ENCODE measurements at regions of chr6 and their contacts with region 1.

Region 1: DNA sequence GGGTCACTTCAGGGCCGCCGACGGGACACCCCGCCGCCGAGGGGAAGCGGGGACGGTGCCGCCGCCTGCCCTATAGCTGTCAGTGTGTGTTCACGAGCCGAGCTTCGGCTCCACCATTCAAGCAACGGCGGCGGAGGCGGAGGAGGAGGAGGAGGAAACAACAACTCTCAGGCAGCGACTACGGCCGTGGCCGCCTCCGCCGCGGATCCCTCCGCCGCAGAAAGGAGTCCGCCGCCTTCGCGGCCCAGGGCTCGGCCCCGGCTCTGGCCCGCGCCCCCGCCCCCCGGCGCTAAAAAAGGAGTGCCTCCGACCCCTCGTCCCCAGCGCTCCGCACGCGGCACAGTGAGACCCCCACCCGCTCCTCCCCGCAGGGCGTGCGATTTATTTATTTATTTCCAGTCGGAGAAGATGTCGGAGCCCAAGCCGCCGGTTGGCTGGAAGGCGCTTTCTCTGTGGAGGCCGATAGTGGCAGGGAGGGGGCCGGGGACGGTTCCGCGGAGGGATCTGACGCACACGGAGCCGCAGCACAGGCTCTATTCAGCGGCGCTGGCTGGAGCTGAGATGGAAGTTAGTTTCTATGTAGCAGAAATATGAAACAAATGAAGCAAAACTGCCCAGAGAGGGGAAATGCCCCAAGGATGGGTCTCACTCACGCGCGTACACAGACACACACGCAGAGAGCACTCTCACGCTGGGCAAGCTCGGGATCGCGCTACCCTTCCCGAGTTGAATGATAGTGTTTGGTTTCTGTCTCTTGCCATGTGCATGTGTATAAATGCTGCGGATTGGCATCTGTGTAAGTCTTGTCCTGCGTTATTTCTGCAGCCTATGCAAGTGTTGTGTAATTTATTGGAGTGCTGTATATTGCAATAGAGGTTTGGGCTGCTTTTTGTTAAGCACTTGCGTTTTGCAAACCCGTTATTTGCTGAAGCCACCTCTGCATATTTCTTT is at the start of gene PHIP:
- DNase-seq: peak; percentile 84 to 97 (median 91)
- ATAC-seq: peak; percentile 81
- H3K4me3 ChIP-seq: peak within 1 kb of the TSS; percentile 77 to 89
- H3K4me3 Mint-ChIP-seq: peak within 1 kb of the TSS; percentile 89
- H3K27ac ChIP-seq: peak within 1 kb of the TSS; percentile 90 to 95
- H3K27ac Mint-ChIP-seq: peak within 1 kb of the TSS; percentile 92
- H3K4me1 ChIP-seq: peaks cover 21% of the 10 kb centered on the region
- H3K4me1 Mint-ChIP-seq: peaks cover 41% of the 10 kb centered on the region
- H3K27me3 ChIP-seq: no peaks in the 10 kb centered on the region
- H3K27me3 Mint-ChIP-seq: peaks cover 12% of the 10 kb centered on the region
- CTCF ChIP-seq: no peak
- total RNA-seq, gene PHIP: 32.3 to 32.6 TPM

Region 2: GRCh38 chr6:77447254-77447653 is 1631.1 kb before region 1 on chr6:
- CTCF ChIA-PET with region 1: no interaction called
- POLR2A ChIA-PET with region 1: no interaction called
- intact Hi-C with region 1: no loop called
- DNase-seq: no peak
- ATAC-seq: no peak
- H3K4me3 ChIP-seq: no peak overlapping the region
- H3K4me3 Mint-ChIP-seq: no peak overlapping the region
- H3K27ac ChIP-seq: no peak overlapping the region
- H3K27ac Mint-ChIP-seq: no peak overlapping the region
- H3K4me1 ChIP-seq: no peaks in the 10 kb centered on the region
- H3K4me1 Mint-ChIP-seq: no peaks in the 10 kb centered on the region
- H3K27me3 ChIP-seq: no peaks in the 10 kb centered on the region
- H3K27me3 Mint-ChIP-seq: no peaks in the 10 kb centered on the region
- CTCF ChIP-seq: no peak

Region 3: DNA sequence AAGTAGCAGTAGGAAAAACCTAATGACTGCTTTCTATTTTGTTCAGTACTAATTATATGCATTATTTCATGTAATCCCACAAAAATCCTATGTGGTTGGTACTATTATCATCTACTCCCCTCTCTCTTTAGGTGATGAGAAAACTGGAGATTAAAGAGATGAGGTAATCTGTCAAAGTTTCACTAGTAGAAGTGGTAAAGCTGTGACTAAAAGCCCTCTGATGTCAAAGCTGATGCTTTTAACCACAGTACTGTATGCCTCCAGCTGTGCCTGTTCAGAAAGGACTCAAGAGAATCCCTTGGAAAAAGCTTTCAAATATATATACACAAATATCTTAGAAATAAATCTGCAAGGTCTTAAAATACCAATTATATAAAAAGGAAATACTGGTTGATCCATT is 38.3 kb before region 1 on chr6:
- CTCF ChIA-PET with region 1: interaction called, 3 read pairs
- POLR2A ChIA-PET with region 1: interaction called, 16 read pairs
- intact Hi-C with region 1: loop called in 1 of 2 experiments (anchors 5 kb)
- DNase-seq: no peak
- ATAC-seq: no peak
- H3K4me3 ChIP-seq: no peak overlapping the region
- H3K4me3 Mint-ChIP-seq: no peak overlapping the region
- H3K27ac ChIP-seq: no peak overlapping the region
- H3K27ac Mint-ChIP-seq: no peak overlapping the region
- H3K4me1 ChIP-seq: peaks cover 10% of the 10 kb centered on the region
- H3K4me1 Mint-ChIP-seq: peaks cover 67% of the 10 kb centered on the region
- H3K27me3 ChIP-seq: no peaks in the 10 kb centered on the region
- H3K27me3 Mint-ChIP-seq: no peaks in the 10 kb centered on the region
- CTCF ChIP-seq: no peak

Region 4: GRCh38 chr6:79057746-79058145 is 20.6 kb before region 1 on chr6:
- CTCF ChIA-PET with region 1: no interaction called
- POLR2A ChIA-PET with region 1: interaction called, 18 read pairs
- intact Hi-C with region 1: loop called in 1 of 2 experiments (anchors 2 kb)
- DNase-seq: no peak
- ATAC-seq: no peak
- H3K4me3 ChIP-seq: no peak overlapping the region
- H3K4me3 Mint-ChIP-seq: no peak overlapping the region
- H3K27ac ChIP-seq: no peak overlapping the region
- H3K27ac Mint-ChIP-seq: no peak overlapping the region
- H3K4me1 ChIP-seq: no peaks in the 10 kb centered on the region
- H3K4me1 Mint-ChIP-seq: peaks cover 25% of the 10 kb centered on the region
- H3K27me3 ChIP-seq: no peaks in the 10 kb centered on the region
- H3K27me3 Mint-ChIP-seq: no peaks in the 10 kb centered on the region
- CTCF ChIP-seq: no peak

Region 5: GRCh38 chr6:79233611-79234149 is 155.3 kb after region 1 on chr6:
- CTCF ChIA-PET with region 1: interaction called, 3 read pairs
- POLR2A ChIA-PET with region 1: interaction called, 13 read pairs
- intact Hi-C with region 1: loop called (anchors 1 to 2 kb)
- DNase-seq: peak; percentile 14 to 80 (median 62)
- ATAC-seq: peak; percentile 44
- H3K4me3 ChIP-seq: peak overlapping the region; percentile 66 to 98
- H3K4me3 Mint-ChIP-seq: peak overlapping the region; percentile 99
- H3K27ac ChIP-seq: peak overlapping the region; percentile 46 to 66
- H3K27ac Mint-ChIP-seq: peak overlapping the region; percentile 84
- H3K4me1 ChIP-seq: peaks cover 7% of the 10 kb centered on the region
- H3K4me1 Mint-ChIP-seq: peaks cover 33% of the 10 kb centered on the region
- H3K27me3 ChIP-seq: no peaks in the 10 kb centered on the region
- H3K27me3 Mint-ChIP-seq: no peaks in the 10 kb centered on the region
- CTCF ChIP-seq: no peak

Region 6: GRCh38 chr6:79777713-79778579 is 699.6 kb after region 1 on chr6:
- CTCF ChIA-PET with region 1: no interaction called
- POLR2A ChIA-PET with region 1: no interaction called
- intact Hi-C with region 1: loop called in 1 of 2 experiments (anchors 10 kb)
- DNase-seq: peak; percentile 65 to 90 (median 82)
- ATAC-seq: peak; percentile 97
- H3K4me3 ChIP-seq: peak overlapping the region; percentile 36 to 38
- H3K4me3 Mint-ChIP-seq: peak overlapping the region; percentile 78
- H3K27ac ChIP-seq: no peak overlapping the region
- H3K27ac Mint-ChIP-seq: no peak overlapping the region
- H3K4me1 ChIP-seq: peaks cover 4% of the 10 kb centered on the region
- H3K4me1 Mint-ChIP-seq: peaks cover 6% of the 10 kb centered on the region
- H3K27me3 ChIP-seq: no peaks in the 10 kb centered on the region
- H3K27me3 Mint-ChIP-seq: peaks cover 2% of the 10 kb centered on the region
- CTCF ChIP-seq: peak; percentile 94

Region 7: GRCh38 chr6:80004173-80005072 is 926.1 kb after region 1 on chr6 and contains the start of gene TTK:
- CTCF ChIA-PET with region 1: no interaction called
- POLR2A ChIA-PET with region 1: interaction called, 3 read pairs
- intact Hi-C with region 1: loop called (anchors 1 to 2 kb)
- DNase-seq: peak; percentile 85 to 97 (median 90)
- ATAC-seq: peak; percentile 97
- H3K4me3 ChIP-seq: peak within 1 kb of the TSS; percentile 76 to 86
- H3K4me3 Mint-ChIP-seq: peak within 1 kb of the TSS; percentile 87
- H3K27ac ChIP-seq: peak within 1 kb of the TSS; percentile 84 to 95
- H3K27ac Mint-ChIP-seq: peak within 1 kb of the TSS; percentile 95
- H3K4me1 ChIP-seq: peaks cover 11% of the 10 kb centered on the region
- H3K4me1 Mint-ChIP-seq: peaks cover 24% of the 10 kb centered on the region
- H3K27me3 ChIP-seq: no peaks in the 10 kb centered on the region
- H3K27me3 Mint-ChIP-seq: peaks cover 5% of the 10 kb centered on the region
- CTCF ChIP-seq: no peak
- total RNA-seq, gene TTK: 0.30 to 0.97 TPM